GM23248 (cell line): ENCODE measurements at regions of chr3 and their contacts with region 1.

Region 1: DNA sequence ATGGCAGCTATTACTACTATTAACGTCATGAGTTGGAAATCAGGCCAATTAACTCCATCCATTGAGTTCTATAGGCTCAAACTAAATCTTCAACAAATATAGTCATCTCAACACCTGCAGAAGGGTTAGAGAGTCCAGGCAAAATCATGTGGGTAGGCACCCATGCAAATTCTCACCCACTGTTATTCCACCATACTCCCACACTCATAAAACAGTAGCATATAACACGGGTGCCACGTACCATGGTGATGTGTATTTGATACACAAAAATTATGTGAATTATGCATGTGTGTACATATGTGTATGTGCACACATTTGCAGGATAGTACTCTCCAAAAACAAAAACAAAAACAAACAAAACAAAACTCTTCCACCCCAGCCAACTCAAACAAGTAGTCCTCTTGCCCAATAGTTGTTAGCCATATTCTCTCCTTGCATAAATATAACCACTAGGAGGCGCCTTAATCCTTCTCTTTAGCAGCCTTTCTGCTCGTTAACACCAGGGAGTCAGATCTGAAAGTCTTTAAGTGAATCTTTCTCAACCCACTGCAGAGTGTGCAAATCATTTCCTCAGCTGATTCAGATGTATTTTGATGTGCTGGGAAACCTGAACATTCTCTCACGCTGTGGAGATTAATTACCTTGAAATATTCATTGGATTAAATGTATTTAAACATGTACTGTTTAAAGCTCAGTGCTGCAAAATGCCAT is 38.0 kb upstream of the COPB2 start:
- DNase-seq: peak; percentile 87
- H3K4me3 ChIP-seq: no peak overlapping the region
- H3K27ac ChIP-seq: no peak overlapping the region
- H3K4me1 ChIP-seq: no peaks in the 10 kb centered on the region
- H3K27me3 ChIP-seq: no peaks in the 10 kb centered on the region

Region 2: DNA sequence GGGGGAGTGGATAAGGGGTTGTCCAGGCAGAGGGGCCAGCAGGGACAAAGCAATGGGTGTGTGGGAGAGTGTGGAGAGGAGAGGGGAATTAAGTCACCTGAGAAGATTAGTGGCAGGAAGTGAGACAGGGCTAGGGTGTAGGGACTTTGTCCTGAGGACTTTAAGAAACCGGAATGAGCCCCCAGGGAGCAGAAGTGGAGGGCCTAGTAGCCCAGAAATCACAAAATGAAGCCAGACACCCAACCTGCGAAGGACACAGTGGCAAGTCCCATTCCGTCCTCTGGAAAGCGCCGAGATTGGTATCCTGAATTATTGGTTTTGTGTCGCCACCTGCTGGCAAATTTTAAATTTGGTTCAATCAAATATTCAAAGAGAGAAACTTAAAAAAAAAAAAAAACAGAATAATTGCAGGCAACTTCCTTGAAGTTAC is 1436.2 kb after region 1 on chr3:
- in situ Hi-C with region 1: loop called (anchors 25 kb)
- DNase-seq: peak; percentile 72
- H3K4me3 ChIP-seq: no peak overlapping the region
- H3K27ac ChIP-seq: no peak overlapping the region
- H3K4me1 ChIP-seq: no peaks in the 10 kb centered on the region
- H3K27me3 ChIP-seq: peaks cover 9% of the 10 kb centered on the region